GM12878 (cell line): ENCODE measurements at regions of chr14 and their contacts with region 1.

Region 1: GRCh38 chr14:69586404-69586803 is 11.7 kb upstream of the CCDC177 start:
- DNase-seq: no peak
- ATAC-seq: no peak
- H3K4me3 ChIP-seq: no peak overlapping the region
- H3K27ac ChIP-seq: no peak overlapping the region
- H3K4me1 ChIP-seq: no peaks in the 10 kb centered on the region
- H3K27me3 ChIP-seq: no peaks in the 10 kb centered on the region
- CTCF ChIP-seq: no peak
- EP300 ChIP-seq: no peak
- POLR2A ChIP-seq: no peak
- RAD21 ChIP-seq: no peak

Region 2: GRCh38 chr14:69715725-69716477 is 129.5 kb after region 1 on chr14:
- CTCF ChIA-PET with region 1: interaction called, 11 read pairs
- POLR2A ChIA-PET with region 1: no interaction called
- RAD21 ChIA-PET with region 1: no interaction called
- SMC1A ChIA-PET with region 1: interaction called, 3 read pairs
- in situ Hi-C with region 1: no loop called
- intact Hi-C with region 1: no loop called
- DNase-seq: no peak
- ATAC-seq: no peak
- H3K4me3 ChIP-seq: no peak overlapping the region
- H3K27ac ChIP-seq: no peak overlapping the region
- H3K4me1 ChIP-seq: peaks cover 3% of the 10 kb centered on the region
- H3K27me3 ChIP-seq: no peaks in the 10 kb centered on the region
- CTCF ChIP-seq: no peak
- EP300 ChIP-seq: no peak
- POLR2A ChIP-seq: no peak
- RAD21 ChIP-seq: no peak